ENCODE measurements at regions of chr6 and their contacts with region 1.

Region 1: DNA sequence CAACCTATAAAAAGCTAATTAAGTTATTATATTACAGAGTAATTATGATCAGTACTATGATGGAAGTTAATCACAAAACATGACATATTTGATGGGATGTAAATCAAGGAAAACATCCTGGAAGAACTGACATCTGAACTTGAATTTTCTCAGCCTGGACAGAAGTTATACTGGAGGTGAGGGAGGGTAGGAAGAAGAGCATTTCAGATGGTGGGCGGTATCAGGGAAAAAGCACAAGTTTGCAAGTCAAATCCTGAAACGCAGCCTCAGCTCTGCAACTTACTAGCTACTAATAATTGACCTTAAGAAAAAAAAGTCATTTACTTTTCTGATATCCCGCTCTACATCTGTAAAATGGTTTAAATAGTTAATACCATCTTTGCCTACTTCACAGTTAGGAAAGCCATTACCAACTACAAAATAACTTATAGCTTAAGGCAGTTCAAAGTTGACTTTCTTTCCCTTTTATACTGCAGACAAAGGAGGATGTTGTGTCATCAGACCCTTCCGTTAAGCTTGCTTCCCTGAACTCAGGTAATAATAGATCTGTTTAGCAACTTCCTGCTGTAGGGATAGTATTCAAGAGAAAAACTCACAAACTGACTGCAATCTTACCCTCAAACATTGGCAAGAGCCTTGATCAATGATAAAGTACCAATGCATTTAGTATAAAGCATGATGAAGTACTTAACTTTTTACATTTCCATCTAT is 21.0 kb downstream of the NOL7 start:
- DNase-seq: no peak
- H3K4me3 Mint-ChIP-seq: peak overlapping the region; percentile 2
- H3K27ac Mint-ChIP-seq: peak overlapping the region; percentile 76
- H3K4me1 Mint-ChIP-seq: peaks cover 27% of the 10 kb centered on the region
- H3K27me3 Mint-ChIP-seq: no peaks in the 10 kb centered on the region

Region 2: DNA sequence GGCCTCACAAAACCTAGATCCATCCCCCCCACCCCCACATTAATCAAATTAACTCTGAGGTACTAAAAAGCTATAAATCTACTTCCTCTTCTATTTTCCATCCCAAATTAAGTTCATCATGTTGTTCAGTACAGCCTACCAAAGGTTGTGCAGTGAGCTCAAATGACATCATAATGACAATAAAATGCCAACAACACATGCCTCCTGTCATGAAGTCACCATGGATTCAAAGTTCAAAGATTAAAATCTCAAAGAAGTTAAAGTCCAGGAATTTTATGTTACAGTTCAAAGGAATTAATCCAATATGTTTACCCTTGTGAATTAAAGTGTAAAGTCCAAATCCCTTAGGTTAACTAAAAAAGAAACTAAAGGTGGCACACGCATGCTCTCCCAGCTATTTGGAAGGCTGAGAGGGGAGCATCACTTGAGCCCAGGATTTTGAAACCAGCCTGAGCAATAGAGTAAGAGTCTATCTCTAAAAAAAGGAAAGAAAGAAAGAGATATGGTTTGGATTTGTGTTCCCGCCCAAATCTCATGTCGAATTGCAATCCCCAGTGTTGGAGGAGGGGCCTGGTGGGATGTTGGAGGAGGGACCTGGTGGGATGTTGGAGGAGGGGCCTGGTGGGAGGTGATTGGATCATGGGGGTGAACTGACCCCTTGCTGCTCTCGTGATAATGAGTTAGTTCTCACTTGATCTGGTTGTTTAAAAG is 87.4 kb before region 1 on chr6:
- CTCF ChIA-PET with region 1: no interaction called
- POLR2A ChIA-PET with region 1: no interaction called
- DNase-seq: no peak
- H3K4me3 Mint-ChIP-seq: no peak overlapping the region
- H3K27ac Mint-ChIP-seq: no peak overlapping the region
- H3K4me1 Mint-ChIP-seq: no peaks in the 10 kb centered on the region
- H3K27me3 Mint-ChIP-seq: peaks cover 7% of the 10 kb centered on the region

Region 3: DNA sequence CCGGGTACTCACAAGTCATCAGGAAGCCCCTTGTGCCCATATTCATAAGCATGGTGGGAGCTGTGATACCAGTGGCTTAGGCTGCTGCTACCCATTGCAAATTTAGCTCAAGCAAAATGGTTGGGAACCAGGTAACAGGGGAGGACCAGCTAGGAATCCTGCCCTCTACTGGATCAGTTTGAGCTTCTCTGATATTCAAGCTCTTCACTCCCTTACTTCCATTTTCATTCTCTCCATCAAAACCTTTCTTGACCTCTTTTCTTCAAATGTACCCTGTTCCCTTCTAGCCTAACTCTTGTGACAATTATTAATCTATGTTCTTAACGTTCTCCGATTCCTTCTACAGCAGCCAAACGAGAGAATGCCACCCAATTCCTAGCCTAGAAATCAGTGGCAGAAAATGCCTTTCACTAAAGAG is 11.2 kb before region 1 on chr6:
- CTCF ChIA-PET with region 1: interaction called, 11 read pairs
- POLR2A ChIA-PET with region 1: interaction called, 5 read pairs
- DNase-seq: peak; percentile 25
- H3K4me3 Mint-ChIP-seq: no peak overlapping the region
- H3K27ac Mint-ChIP-seq: peak overlapping the region; percentile 16
- H3K4me1 Mint-ChIP-seq: peaks cover 15% of the 10 kb centered on the region
- H3K27me3 Mint-ChIP-seq: no peaks in the 10 kb centered on the region

Region 4: GRCh38 chr6:13965582-13966127 is 329.6 kb after region 1 on chr6:
- CTCF ChIA-PET with region 1: no interaction called
- POLR2A ChIA-PET with region 1: no interaction called
- DNase-seq: no peak
- H3K4me3 Mint-ChIP-seq: no peak overlapping the region
- H3K27ac Mint-ChIP-seq: no peak overlapping the region
- H3K4me1 Mint-ChIP-seq: no peaks in the 10 kb centered on the region
- H3K27me3 Mint-ChIP-seq: peaks cover 33% of the 10 kb centered on the region

Region 5: GRCh38 chr6:14025160-14025559 is 389.1 kb after region 1 on chr6:
- CTCF ChIA-PET with region 1: no interaction called
- POLR2A ChIA-PET with region 1: no interaction called
- DNase-seq: no peak
- H3K4me3 Mint-ChIP-seq: no peak overlapping the region
- H3K27ac Mint-ChIP-seq: no peak overlapping the region
- H3K4me1 Mint-ChIP-seq: peaks cover 3% of the 10 kb centered on the region
- H3K27me3 Mint-ChIP-seq: peaks cover 23% of the 10 kb centered on the region

Measured in activated CD4-positive, alpha-beta memory T cell treated with anti-CD3 and anti-CD28 coated beads, Interleukin-2, amount 10 ng/mL, durations not matched to agents 7 days and 5 days (primary cell).